WTC11 (cell line): ENCODE measurements at regions of chr6 and their contacts with region 1.

Region 1: DNA sequence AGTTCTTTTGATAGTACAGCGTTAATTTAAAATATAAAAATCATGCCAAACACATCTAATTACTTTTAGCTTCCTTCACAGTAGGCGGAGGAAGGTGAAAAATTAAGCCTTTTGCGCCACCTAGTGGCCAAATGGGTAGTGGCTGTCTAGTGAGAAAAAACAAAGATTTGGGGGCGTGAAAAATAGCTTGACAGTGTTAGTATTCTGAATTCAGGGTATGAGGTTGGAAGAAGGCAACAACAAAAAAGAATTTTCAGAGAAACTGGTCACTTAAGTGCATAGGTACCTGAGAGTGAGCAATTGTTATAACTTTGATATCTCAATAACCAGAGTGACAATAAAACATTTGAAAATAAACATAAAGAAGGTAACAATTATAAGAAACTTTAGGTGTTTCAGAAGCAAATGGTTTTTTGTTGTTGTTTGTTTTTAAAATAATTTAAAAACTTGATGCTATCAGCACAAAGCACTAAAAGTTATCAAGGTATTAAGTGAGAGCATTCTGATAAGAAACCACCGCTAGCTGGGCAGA is 14.3 kb downstream of the PSMB9 start:
- DNase-seq: peak; percentile 79
- ATAC-seq: peak; percentile 50
- H3K4me3 Mint-ChIP-seq: no peak overlapping the region
- H3K27ac Mint-ChIP-seq: no peak overlapping the region
- H3K4me1 Mint-ChIP-seq: no peaks in the 10 kb centered on the region
- H3K27me3 Mint-ChIP-seq: peaks cover 16% of the 10 kb centered on the region
- CTCF ChIP-seq: peak; percentile 86

Region 2: GRCh38 chr6:32738126-32738525 is 130.2 kb before region 1 on chr6:
- CTCF ChIA-PET with region 1: no interaction called
- POLR2A ChIA-PET with region 1: no interaction called
- DNase-seq: no peak
- ATAC-seq: no peak
- H3K4me3 Mint-ChIP-seq: no peak overlapping the region
- H3K27ac Mint-ChIP-seq: no peak overlapping the region
- H3K4me1 Mint-ChIP-seq: no peaks in the 10 kb centered on the region
- H3K27me3 Mint-ChIP-seq: no peaks in the 10 kb centered on the region; the same call in 1 of the 2 replicates
- CTCF ChIP-seq: no peak

Region 3: DNA sequence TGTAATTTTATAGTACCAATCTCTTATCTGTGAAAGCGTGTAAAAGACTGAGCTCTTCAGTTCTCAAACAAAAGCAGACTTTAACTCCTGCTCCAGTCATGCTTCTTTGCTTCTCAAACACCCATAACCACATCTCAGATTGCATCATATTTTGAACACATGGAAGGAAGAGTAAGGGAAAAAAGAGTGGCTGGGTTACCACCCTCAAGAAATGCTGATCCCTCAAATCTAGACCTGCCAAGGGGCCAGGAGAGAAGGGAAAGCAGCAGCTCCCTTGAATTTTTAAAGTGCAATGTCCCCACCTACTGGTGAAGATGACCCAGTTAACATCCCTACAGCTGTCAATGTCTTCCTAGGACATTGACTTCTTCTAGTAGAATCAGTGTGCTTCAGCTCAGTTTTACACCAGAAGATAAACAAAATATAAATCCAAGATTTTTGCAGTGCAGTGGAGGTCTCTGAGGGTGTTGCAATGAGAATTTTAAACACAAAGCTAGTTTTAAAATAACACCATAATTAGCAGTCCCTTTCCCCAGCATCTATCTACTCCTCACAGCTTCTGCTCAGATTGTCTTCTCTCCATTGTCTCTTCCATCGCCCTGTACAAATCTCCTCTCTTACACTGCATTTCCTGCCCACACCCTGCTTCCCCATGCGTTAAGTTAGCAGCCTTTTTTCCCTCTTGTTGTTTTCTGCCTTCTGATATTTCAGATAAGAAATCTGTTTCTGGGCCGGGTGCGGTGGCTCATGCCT is 82.4 kb before region 1 on chr6:
- CTCF ChIA-PET with region 1: interaction called, 10 read pairs
- POLR2A ChIA-PET with region 1: no interaction called
- DNase-seq: peak; percentile 42
- ATAC-seq: peak; percentile 91
- H3K4me3 Mint-ChIP-seq: no peak overlapping the region
- H3K27ac Mint-ChIP-seq: no peak overlapping the region
- H3K4me1 Mint-ChIP-seq: no peaks in the 10 kb centered on the region
- H3K27me3 Mint-ChIP-seq: peaks cover 4% of the 10 kb centered on the region; the same call in 1 of the 2 replicates
- CTCF ChIP-seq: peak; percentile 58

Region 4: GRCh38 chr6:32825966-32826365 is 42.4 kb before region 1 on chr6:
- CTCF ChIA-PET with region 1: interaction called, 67 read pairs
- POLR2A ChIA-PET with region 1: no interaction called
- DNase-seq: no peak
- ATAC-seq: peak; percentile 86
- H3K4me3 Mint-ChIP-seq: no peak overlapping the region
- H3K27ac Mint-ChIP-seq: peak overlapping the region; percentile 68; the same call in 1 of the 2 replicates
- H3K4me1 Mint-ChIP-seq: peaks cover 9% of the 10 kb centered on the region
- H3K27me3 Mint-ChIP-seq: no peaks in the 10 kb centered on the region
- CTCF ChIP-seq: no peak

Region 5: GRCh38 chr6:32853541-32854375 is 14.6 kb before region 1 on chr6 and contains the starts of genes PSMB9 and TAP1:
- CTCF ChIA-PET with region 1: interaction called, 77 read pairs
- POLR2A ChIA-PET with region 1: no interaction called
- DNase-seq: peak; percentile 94
- ATAC-seq: peak; percentile 91
- H3K4me3 Mint-ChIP-seq: peak within 1 kb of the TSS; percentile 88
- H3K27ac Mint-ChIP-seq: peak within 1 kb of the TSS; percentile 90
- H3K4me1 Mint-ChIP-seq: peaks cover 14% of the 10 kb centered on the region
- H3K27me3 Mint-ChIP-seq: peaks cover 91% of the 10 kb centered on the region
- CTCF ChIP-seq: 0 out of 2 replicates have a peak, but pooled peaks have one; percentile 31
- total RNA-seq, gene PSMB9: 1.8 to 4.3 TPM (median 4.0 TPM) in 3 replicates
- total RNA-seq, gene TAP1: 13.6 to 15.9 TPM (median 15.7 TPM) in 3 replicates

Region 6: DNA sequence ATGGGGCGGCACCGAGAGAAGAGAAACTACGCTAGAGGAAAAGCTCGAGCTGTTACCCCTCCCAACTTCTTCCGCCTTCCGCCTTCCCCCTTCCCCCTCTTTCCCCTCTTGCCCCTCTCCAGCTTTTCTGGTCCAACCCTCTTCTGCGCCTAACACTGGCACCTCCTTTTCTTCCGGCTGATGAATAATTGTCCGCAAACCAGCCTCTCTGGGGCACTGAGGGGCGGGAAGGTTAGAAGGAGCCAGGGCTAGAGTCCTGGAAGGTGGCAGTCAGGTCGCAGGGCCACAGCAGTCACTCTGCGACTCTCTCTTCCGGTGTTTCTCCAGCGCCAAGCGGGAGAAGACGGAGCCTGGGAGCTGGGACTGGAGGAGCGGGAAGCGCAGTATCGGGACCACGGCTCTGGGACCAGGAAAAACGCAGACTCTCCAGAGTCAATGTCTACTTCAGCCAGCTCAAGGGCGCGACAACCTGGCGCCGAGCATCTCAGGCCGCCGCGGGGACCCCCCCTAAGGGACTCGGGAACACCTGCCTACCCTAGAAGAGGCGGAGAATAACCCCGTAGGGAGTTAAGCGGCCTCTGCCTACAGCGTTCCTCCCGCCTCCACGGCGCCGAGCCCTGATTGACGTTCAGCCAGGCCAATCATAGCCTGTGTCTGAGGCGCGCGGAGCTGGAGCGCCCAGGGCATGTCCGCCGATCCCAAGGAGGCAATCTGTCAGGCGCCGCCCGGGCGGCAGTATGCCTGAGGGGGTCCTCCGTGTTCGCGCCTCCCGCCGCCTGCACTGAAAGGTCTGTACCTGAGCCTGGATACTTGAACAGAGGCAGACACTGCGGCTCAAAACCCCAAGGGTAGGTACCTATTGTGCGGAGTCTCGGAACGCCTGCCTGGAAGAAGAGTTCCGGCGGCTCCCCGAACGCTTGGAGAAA is 26.0 kb after region 1 on chr6:
- CTCF ChIA-PET with region 1: interaction called, 12 read pairs
- POLR2A ChIA-PET with region 1: no interaction called
- DNase-seq: peak; percentile 96
- ATAC-seq: peak; percentile 98
- H3K4me3 Mint-ChIP-seq: peak overlapping the region; percentile 98
- H3K27ac Mint-ChIP-seq: peak overlapping the region; percentile 99
- H3K4me1 Mint-ChIP-seq: peaks cover 13% of the 10 kb centered on the region
- H3K27me3 Mint-ChIP-seq: peaks cover 3% of the 10 kb centered on the region; the same call in 1 of the 2 replicates
- CTCF ChIP-seq: no peak